ENCODE measurements at regions of chr10 and their contacts with region 1.

Region 1: GRCh38 chr10:103685880-103686669 is 169.3 kb downstream of the SH3PXD2A start:
- DNase-seq: peak; percentile 85
- ATAC-seq: peak; percentile 78
- H3K4me3 Mint-ChIP-seq: no peak overlapping the region
- H3K27ac Mint-ChIP-seq: 0 out of 2 replicates have a peak overlapping the region, but pooled peaks have one; percentile 3
- H3K4me1 Mint-ChIP-seq: peaks cover 18% of the 10 kb centered on the region
- H3K27me3 Mint-ChIP-seq: peaks cover 4% of the 10 kb centered on the region
- CTCF ChIP-seq: peak; percentile 95

Region 2: DNA sequence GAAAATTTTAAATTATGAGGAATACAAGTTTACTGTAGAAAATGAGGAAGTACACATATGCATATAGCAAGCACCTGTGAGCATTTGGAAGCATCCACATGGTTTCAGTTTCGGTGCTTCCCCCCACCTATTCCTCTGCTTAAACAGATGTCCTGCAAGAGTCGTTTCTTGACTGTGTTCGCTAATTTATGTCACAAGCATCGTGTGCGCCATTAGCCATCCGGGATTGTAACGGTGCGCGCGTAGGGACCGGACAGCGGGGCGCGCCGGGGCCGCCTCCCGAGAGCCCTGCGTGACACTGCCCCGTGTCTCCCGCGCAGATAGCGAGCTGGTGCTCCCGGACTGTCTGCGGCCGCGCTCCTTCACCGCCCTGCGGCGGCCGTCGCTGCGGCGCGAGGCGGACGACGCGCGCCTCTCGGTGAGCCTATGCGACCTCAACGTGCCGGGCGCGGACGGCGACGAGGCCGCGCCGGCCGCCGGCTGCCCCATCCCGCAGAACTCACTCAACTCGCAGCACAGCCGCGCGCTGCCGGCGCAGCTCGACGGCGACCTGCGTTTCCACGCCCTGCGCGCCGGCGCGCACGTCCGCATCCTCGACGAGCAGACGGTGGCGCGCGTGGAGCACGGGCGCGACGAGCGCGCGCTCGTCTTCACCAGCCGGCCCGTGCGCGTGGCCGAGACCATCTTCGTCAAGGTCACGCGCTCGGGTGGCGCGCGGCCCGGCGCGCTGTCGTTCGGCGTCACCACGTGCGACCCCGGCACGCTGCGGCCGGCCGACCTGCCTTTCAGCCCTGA is 101.7 kb before region 1 on chr10:
- CTCF ChIA-PET with region 1: interaction called, 49 read pairs
- POLR2A ChIA-PET with region 1: no interaction called
- DNase-seq: peak; percentile 43
- ATAC-seq: peak; percentile 24
- H3K4me3 Mint-ChIP-seq: peak overlapping the region; percentile 50; the same call in 1 of the 2 replicates
- H3K27ac Mint-ChIP-seq: no peak overlapping the region
- H3K4me1 Mint-ChIP-seq: 0 out of 2 replicates have a peak, but pooled peaks cover 2% of the 10 kb centered on the region
- H3K27me3 Mint-ChIP-seq: peaks cover 42% of the 10 kb centered on the region
- CTCF ChIP-seq: no peak

Region 3: DNA sequence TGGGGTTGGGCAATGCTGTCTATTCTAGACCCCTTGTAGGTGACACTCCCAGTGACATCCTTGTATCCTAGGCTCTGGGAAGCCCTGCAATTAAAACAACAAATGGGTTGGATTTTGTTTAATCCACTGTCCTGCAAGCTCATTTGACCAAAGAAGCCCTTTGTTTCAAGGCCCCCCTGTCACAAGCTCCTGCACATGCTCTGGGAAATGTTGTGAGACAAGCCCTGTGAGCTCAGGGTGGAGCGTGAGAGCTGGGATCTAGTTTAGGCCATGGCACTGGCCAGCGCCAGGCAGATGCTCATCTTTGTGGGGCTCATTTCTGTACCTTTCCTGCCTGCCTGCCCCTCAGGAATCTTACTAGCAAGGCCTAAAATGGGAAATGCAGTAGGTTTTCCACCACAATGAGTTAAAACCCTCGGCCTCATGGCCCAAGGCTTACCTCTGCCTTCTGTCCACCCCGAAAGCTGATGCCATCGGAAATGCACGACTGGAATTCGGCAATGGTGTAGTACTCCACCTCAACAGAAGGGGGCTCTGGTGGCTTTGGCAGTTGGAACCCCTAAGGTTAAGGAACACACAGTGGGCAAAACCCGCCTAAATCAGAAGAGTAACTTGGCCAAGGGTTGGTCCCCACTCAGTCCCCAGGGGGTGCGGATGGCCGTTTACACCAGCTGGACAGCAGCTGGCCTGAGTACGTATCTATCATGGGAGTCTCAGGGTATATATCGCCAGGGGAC is 80.5 kb before region 1 on chr10:
- CTCF ChIA-PET with region 1: interaction called, 84 read pairs
- POLR2A ChIA-PET with region 1: interaction called, 3 read pairs
- DNase-seq: peak; percentile 77
- ATAC-seq: peak; percentile 76
- H3K4me3 Mint-ChIP-seq: no peak overlapping the region
- H3K27ac Mint-ChIP-seq: no peak overlapping the region
- H3K4me1 Mint-ChIP-seq: no peaks in the 10 kb centered on the region
- H3K27me3 Mint-ChIP-seq: peaks cover 5% of the 10 kb centered on the region; the same call in 1 of the 2 replicates
- CTCF ChIP-seq: peak; percentile 75

Region 4: DNA sequence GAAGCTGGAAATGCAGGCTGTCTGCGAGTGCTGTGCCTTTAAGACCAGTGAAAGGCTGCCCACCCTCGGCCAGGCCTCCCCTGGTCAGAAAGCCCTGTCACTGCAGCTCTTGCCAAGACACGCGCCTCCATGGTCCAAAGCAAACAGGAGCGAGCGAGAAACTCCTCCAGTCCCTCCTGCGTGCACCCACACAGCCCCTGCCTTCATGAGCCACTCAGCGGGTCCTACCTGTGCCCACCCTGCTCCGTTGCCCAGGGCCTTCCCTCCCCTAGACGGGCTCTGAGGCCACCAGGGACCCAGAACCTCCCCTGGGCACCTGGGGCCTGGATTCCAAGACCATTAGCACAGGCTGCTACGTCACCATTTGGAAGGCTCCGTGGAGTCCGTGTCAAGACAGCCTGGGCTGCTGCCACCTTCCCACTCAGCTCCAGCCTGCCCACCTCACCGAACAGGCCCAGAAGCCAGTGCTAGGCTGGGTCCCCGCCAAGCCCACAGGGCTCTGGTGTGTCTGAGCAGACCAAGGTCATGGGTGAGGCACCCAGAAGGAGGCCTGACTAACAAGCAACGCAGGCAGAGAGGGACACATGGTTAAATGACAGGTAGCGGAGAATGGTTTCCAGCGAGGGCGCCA is 48.0 kb before region 1 on chr10:
- CTCF ChIA-PET with region 1: interaction called, 27 read pairs
- POLR2A ChIA-PET with region 1: interaction called, 4 read pairs
- DNase-seq: no peak
- ATAC-seq: no peak
- H3K4me3 Mint-ChIP-seq: no peak overlapping the region
- H3K27ac Mint-ChIP-seq: no peak overlapping the region
- H3K4me1 Mint-ChIP-seq: peaks cover 51% of the 10 kb centered on the region
- H3K27me3 Mint-ChIP-seq: no peaks in the 10 kb centered on the region
- CTCF ChIP-seq: no peak

Region 5: GRCh38 chr10:103666087-103666761 is 19.9 kb before region 1 on chr10:
- CTCF ChIA-PET with region 1: interaction called, 50 read pairs
- POLR2A ChIA-PET with region 1: no interaction called
- DNase-seq: peak; percentile 70
- ATAC-seq: peak; percentile 14; the same call in 1 of the 2 replicates
- H3K4me3 Mint-ChIP-seq: no peak overlapping the region
- H3K27ac Mint-ChIP-seq: peak overlapping the region; percentile 73; the same call in 1 of the 2 replicates
- H3K4me1 Mint-ChIP-seq: peaks cover 28% of the 10 kb centered on the region
- H3K27me3 Mint-ChIP-seq: no peaks in the 10 kb centered on the region
- CTCF ChIP-seq: 0 out of 2 replicates have a peak, but pooled peaks have one; percentile 29

Region 6: DNA sequence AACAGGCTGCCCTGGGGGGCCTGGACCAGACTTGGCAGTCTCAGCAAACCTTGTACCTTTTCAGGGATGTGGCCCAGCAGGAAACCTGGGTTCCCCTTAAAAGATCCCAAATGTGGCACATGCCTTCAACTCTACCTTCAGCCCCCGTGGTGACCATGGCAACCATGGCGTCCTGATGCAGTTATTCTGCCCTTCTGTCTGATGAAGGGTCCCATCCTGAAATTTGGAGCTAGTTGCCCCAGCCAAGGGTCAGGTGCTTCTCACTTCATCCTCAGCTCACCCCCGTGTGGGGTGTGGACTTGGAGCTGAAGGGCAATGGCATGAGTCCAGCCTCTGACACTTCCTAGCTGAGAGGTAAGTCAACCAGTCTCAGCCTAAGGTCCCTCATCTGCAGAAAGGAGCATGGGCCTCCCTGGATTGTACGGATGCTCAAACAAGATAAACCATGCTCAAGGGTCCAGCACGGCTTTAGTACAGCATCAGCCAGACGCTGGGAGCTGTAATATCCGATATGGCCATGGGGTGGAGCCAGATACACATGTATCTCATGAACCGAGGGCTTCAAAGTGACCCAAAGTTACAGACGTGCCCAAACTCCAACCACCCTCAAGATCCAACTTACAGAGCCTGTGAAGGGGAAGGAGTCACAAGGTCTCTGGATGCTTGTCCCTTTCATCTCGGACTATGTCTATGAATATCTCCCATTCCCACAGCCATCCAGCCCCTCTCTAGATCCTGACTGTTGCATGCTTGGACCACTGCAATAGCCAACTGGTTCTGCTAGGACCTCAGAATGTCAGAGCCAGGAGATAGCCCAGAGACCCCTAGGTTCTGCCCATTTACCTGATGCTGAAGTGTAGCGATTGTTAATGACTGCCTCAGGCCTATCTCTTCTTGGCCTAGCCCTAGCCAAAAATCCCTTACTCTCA is 26.8 kb after region 1 on chr10:
- CTCF ChIA-PET with region 1: interaction called, 20 read pairs
- POLR2A ChIA-PET with region 1: no interaction called
- DNase-seq: peak; percentile 92
- ATAC-seq: peak; percentile 84
- H3K4me3 Mint-ChIP-seq: no peak overlapping the region
- H3K27ac Mint-ChIP-seq: peak overlapping the region; percentile 30; the same call in 1 of the 2 replicates
- H3K4me1 Mint-ChIP-seq: peaks cover 9% of the 10 kb centered on the region
- H3K27me3 Mint-ChIP-seq: no peaks in the 10 kb centered on the region
- CTCF ChIP-seq: peak; percentile 90

Region 7: DNA sequence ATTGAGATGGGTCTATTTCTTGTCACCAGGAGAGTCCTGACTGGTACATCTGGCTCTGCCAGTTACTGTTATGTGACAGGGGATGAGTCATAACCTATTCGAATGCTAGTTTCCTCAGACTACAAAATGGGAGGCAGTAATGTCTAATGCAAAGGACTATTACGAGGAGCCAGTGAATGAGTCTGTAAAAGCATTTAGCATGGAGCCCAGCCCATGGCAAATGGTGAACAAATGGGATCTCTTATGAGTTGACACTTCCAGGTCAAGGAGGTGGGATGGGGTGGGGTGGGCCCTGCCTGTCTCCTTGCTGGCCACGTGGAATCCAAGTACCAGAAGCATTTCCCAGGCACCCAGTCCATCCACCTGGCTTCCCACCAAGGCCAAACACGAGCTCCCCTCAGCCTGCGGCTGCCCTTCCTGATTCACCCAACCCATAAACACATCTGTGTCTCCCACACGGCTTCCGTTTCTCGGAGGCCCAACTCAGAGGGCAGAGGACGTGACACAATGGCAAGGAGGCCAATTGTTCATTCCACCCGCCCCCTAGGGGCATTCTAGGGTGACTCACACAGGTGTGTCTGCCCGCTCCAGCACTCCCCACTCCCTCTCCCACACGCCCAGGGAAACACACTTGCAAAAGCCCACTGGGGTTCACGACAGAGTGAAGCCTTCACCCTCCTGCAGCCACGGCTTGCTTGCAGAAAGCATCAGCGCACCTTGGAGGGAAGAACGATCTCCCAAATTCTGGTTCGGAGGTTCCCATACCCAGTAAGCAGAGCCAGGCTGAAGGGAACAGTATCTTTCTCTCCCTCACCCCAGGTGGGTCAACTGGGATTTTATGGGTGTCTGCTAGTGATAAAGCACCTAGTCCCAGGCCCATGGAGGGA is 59.5 kb after region 1 on chr10:
- CTCF ChIA-PET with region 1: no interaction called
- POLR2A ChIA-PET with region 1: no interaction called
- DNase-seq: no peak
- ATAC-seq: peak; percentile 63
- H3K4me3 Mint-ChIP-seq: no peak overlapping the region
- H3K27ac Mint-ChIP-seq: no peak overlapping the region; the same call in 1 of the 2 replicates
- H3K4me1 Mint-ChIP-seq: peaks cover 4% of the 10 kb centered on the region; the same call in 1 of the 2 replicates
- H3K27me3 Mint-ChIP-seq: no peaks in the 10 kb centered on the region
- CTCF ChIP-seq: no peak